ENCODE measurements at regions of chr7 and their contacts with region 1.

Region 1: GRCh38 chr7:100586266-100587025 is at the start of gene FBXO24:
- DNase-seq: peak; percentile 100
- H3K4me3 Mint-ChIP-seq: peak within 1 kb of the TSS; percentile 87
- H3K27ac Mint-ChIP-seq: peak within 1 kb of the TSS; percentile 89
- H3K4me1 Mint-ChIP-seq: peaks cover 23% of the 10 kb centered on the region
- H3K27me3 Mint-ChIP-seq: peaks cover 3% of the 10 kb centered on the region
- total RNA-seq, gene FBXO24: 0.27 and 0.41 TPM in 2 replicates

Region 2: GRCh38 chr7:100545360-100546128 is 40.9 kb before region 1 on chr7:
- intact Hi-C with region 1: loop called (anchors 1 kb)
- DNase-seq: peak; percentile 25
- H3K4me3 Mint-ChIP-seq: peak overlapping the region; percentile 80
- H3K27ac Mint-ChIP-seq: peak overlapping the region; percentile 100
- H3K4me1 Mint-ChIP-seq: peaks cover 98% of the 10 kb centered on the region
- H3K27me3 Mint-ChIP-seq: no peaks in the 10 kb centered on the region

Region 3: DNA sequence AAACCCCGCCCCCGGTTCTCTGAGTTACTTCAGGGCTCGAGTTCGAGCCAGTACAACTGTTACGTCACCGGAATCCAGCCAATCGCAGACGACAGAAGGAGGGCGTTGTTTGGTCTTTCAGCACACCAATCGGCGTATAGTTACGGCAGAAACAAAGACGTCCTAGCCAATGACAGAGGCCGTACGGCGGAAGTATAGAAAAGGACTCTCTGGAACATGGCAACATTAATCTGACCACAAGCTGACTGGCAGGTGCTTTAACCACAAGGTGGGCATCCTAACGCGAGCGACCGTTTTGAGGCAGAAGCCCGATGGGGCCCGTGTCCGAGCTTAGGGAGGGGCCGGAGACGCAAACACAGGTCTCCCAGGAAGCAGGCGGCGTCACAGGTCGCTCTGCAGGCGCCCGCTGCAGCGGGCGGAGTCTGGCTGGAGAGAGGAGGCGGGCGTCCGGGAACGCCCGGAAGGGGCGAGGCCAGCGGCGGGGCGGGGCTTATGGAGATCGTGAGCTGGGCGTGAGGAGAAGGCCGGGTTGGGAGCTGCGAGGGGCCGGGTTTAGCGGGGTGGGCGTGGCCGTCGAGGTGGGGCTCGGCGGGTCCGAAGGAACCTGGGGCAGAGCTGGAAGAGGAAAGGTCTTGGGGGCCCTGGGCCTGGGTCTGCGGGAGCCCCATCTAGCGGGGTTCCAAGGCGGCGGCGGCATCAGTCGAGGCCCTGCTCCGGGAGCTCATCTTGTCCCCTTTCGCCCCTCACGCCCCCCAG is 25.7 kb after region 1 on chr7 and contains the start of gene MOSPD3:
- intact Hi-C with region 1: loop called (anchors 1 kb)
- DNase-seq: peak; percentile 97
- H3K4me3 Mint-ChIP-seq: peak within 1 kb of the TSS; percentile 98
- H3K27ac Mint-ChIP-seq: peak within 1 kb of the TSS; percentile 100
- H3K4me1 Mint-ChIP-seq: peaks cover 22% of the 10 kb centered on the region
- H3K27me3 Mint-ChIP-seq: peaks cover 8% of the 10 kb centered on the region
- total RNA-seq, gene MOSPD3: 10.3 and 11.5 TPM in 2 replicates

Region 4: GRCh38 chr7:100673300-100673941 is 87.0 kb after region 1 on chr7 and contains the start of gene GNB2:
- intact Hi-C with region 1: loop called (anchors 1 kb)
- DNase-seq: peak; percentile 99
- H3K4me3 Mint-ChIP-seq: peak within 1 kb of the TSS; percentile 98
- H3K27ac Mint-ChIP-seq: peak within 1 kb of the TSS; percentile 94
- H3K4me1 Mint-ChIP-seq: peaks cover 10% of the 10 kb centered on the region
- H3K27me3 Mint-ChIP-seq: peaks cover 10% of the 10 kb centered on the region
- total RNA-seq, gene GNB2: 218 and 221 TPM in 2 replicates

Region 5: GRCh38 chr7:100726996-100727761 is 140.7 kb after region 1 on chr7:
- intact Hi-C with region 1: loop called (anchors 1 kb)
- DNase-seq: no peak
- H3K4me3 Mint-ChIP-seq: no peak overlapping the region
- H3K27ac Mint-ChIP-seq: no peak overlapping the region
- H3K4me1 Mint-ChIP-seq: peaks cover 6% of the 10 kb centered on the region
- H3K27me3 Mint-ChIP-seq: peaks cover 11% of the 10 kb centered on the region